Cardiac septum (tissue), 1 donor: ENCODE measurements at regions of chr15 and their contacts with region 1.

Region 1: DNA sequence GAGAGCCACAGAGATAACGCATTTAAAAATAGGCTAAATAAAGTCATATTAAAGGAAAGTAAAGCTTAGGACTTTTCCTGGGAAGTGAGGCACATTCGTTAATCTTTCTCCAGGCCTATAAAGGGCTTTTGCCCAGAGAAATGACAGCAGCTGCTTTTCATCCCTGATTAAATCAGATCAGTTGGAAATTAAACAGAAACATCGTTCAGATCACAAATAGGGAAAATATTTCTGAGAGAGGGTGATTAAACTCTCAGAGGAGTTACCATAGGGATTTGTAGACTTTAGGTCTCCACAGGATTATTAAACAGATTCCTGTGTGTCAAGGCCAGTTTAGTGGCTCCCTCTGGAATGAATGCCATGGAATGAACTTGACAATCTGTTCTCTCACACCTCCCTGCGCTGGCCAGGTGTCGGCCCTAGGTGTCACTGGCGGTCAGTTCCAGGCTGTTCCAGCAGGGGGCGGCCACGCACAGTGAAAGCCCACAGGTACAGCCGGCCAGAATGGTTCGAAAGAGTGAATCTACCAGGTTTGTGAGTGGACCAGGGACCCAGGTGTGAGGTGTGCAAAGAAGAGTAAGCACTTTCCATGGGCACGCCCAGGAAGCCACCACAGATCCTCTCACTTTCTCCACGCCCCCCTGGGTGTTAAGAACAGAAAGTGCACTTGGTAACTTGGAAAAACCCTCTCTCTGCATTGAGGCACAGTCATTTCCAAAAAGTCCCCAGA is 253.0 kb upstream of the RASGRP1 start:
- DNase-seq: peak; percentile 88

Region 2: DNA sequence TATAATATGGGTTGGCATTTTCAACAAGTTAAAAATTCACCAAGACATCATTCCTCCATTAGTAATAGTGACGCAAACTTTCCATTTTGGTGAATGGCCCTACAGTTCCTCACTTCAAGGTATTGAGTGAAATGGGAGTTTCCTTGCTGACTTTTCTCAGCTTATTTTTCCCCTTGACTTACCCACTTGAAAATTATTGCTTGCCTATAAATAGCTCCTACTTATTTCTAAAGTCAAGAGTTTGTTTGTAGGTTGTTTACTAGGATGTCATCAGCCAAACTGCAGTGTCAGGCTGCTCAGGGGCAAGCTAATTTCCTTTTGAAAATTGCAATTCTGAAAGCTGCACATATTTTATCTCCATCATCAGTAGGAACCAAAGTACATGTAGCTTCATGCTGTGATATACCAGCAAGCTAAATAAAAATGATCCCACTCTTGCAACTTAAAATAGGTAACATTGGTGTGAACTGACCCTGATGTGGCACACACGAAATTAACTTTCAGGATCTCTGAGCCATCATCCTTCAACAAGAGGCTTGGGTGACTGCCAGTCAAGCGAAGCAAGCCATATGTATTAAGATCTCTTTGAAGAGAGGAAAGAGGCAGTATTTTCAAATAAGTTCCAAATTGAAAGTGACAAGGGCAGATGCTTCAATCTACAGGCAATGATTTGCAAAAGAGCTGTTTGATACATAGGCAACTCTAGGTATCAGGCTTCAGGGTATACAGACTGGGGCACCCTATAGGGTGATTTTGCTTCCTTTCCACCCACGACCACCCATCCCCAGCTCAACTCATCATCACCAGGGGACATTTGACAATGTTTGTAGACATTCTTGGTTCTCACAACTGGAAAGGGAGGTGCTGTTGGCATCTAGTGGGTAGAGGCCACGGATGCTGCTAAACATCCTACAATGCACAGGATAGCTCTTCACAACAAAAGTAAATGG is 186.2 kb before region 1 on chr15:
- intact Hi-C with region 1: no loop called
- DNase-seq: no peak

Region 3: GRCh38 chr15:38991126-38991525 is 173.5 kb after region 1 on chr15:
- intact Hi-C with region 1: loop called (anchors 5 kb)
- DNase-seq: no peak

Region 4: DNA sequence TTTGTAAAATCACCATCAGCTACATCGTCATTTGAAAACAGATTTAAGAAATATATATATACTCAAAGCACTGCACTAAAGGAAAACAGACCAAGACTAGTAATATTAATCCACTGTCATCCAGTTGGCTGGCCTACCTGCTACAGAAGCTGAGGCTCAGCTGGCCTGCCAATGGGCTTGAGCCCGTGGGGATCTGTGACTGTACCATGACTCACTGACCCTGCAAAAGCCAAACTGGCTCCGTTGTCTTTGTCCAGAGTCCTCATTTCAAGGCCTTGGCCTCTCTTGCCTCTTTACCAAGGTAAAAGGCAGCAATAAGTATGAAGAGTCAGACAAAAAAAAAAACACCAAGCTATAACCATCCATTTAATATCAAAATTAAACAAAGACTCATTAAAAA is 210.5 kb after region 1 on chr15:
- intact Hi-C with region 1: loop called (anchors 10 kb)
- DNase-seq: no peak

Region 5: DNA sequence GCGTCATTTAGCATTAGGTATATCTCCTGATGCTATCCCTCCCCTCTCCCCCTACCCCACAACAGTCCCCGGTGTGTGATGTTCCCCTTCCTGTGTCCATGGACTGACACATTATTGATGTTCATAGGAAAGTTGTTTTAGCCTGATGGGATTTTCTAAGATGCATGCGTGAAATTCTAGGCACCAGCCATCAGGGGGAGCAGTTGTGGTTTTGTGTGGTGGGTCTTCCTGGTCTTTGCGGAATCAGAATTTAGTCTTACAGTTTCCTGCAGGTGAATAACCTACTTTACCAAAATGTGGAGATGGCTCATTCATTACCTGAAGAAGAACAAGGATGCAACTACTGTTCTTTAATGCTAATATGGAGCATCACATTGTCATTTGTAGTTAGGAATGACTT is 308.3 kb after region 1 on chr15:
- intact Hi-C with region 1: loop called (anchors 10 kb)
- DNase-seq: no peak

Region 6: GRCh38 chr15:39756806-39757522 is 939.4 kb after region 1 on chr15:
- intact Hi-C with region 1: loop called (anchors 5 kb)
- DNase-seq: no peak